Naive thymus-derived CD4-positive, alpha-beta T cell (primary cell): ENCODE measurements at regions of chr16 and their contacts with region 1.

Region 1: GRCh38 chr16:30534368-30535105 is at the start of gene ZNF747:
- DNase-seq: peak; percentile 84 to 92 (median 89)
- ATAC-seq: peak; percentile 87
- H3K4me3 ChIP-seq: peak within 1 kb of the TSS; percentile 60
- H3K4me3 Mint-ChIP-seq: peak within 1 kb of the TSS; percentile 91 to 100 (median 96)
- H3K27ac ChIP-seq: peak within 1 kb of the TSS; percentile 98
- H3K27ac Mint-ChIP-seq: peak within 1 kb of the TSS; percentile 94 to 99 (median 98)
- H3K4me1 ChIP-seq: peaks cover 8 to 13% of the 10 kb centered on the region in 2 donors
- H3K4me1 Mint-ChIP-seq: peaks cover 14 to 53% (median 43%) of the 10 kb centered on the region in 7 donors
- H3K27me3 ChIP-seq: no peaks in the 10 kb centered on the region
- H3K27me3 Mint-ChIP-seq: no peaks in the 10 kb centered on the region
- total RNA-seq, gene ZNF747: 9.1 to 17.4 (median 13.8) TPM

Region 2: GRCh38 chr16:30417529-30418349 is 116.8 kb before region 1 on chr16:
- CTCF ChIA-PET with region 1: interaction called, 8 read pairs
- POLR2A ChIA-PET with region 1: interaction called, 23 read pairs
- intact Hi-C with region 1: no loop called
- DNase-seq: peak; percentile 79 to 93 (median 88)
- ATAC-seq: peak; percentile 95
- H3K4me3 ChIP-seq: peak overlapping the region; percentile 76
- H3K4me3 Mint-ChIP-seq: peak overlapping the region; percentile 54 to 80 (median 70)
- H3K27ac ChIP-seq: peak overlapping the region; percentile 85
- H3K27ac Mint-ChIP-seq: peak overlapping the region in 7 of 9 donors; percentile 69 to 88 (median 81)
- H3K4me1 ChIP-seq: peaks cover 6 to 8% of the 10 kb centered on the region in 2 donors
- H3K4me1 Mint-ChIP-seq: peaks cover 12 to 31% (median 14%) of the 10 kb centered on the region in 7 donors
- H3K27me3 ChIP-seq: no peaks in the 10 kb centered on the region
- H3K27me3 Mint-ChIP-seq: no peaks in the 10 kb centered on the region

Region 3: DNA sequence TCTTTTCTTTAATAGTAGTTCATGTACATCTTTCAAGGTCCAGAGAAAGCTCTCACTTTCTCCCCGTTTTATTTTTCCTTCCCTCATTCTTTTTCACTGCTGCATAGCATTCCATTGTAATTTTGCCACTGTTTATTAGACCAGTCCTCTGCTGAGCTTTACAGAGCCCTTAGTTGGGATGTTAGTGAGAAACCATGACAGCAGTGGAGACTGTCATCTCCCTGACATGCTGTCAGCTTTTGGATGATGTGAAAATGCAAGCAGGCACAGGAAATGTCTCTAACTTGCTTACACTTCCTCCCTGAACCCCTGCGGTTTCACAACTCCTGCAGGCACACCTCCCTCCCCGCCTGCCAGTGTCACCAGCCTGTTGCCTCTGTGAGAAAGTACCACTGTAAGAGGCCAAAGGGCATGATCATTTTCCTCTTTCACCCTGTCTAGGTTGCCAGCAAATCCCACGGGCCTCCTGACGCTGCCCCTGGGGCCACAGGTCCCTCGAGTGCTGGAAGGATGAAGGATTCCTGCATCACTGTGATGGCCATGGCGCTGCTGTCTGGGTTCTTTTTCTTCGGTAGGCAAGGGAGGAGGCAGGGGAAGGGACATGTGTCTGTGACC is 62.1 kb before region 1 on chr16 and contains the start of gene ITGAL:
- CTCF ChIA-PET with region 1: interaction called, 3 read pairs
- POLR2A ChIA-PET with region 1: interaction called, 10 read pairs
- intact Hi-C with region 1: loop called in 1 of 2 experiments (anchors 1 kb)
- DNase-seq: peak; percentile 41 to 89 (median 84)
- ATAC-seq: peak; percentile 89
- H3K4me3 ChIP-seq: peak within 1 kb of the TSS; percentile 74
- H3K4me3 Mint-ChIP-seq: peak within 1 kb of the TSS; percentile 83 to 100 (median 98)
- H3K27ac ChIP-seq: peak within 1 kb of the TSS; percentile 84
- H3K27ac Mint-ChIP-seq: peak within 1 kb of the TSS; percentile 88 to 98 (median 96)
- H3K4me1 ChIP-seq: peaks cover 60 to 63% of the 10 kb centered on the region in 2 donors
- H3K4me1 Mint-ChIP-seq: peaks cover 43 to 83% (median 57%) of the 10 kb centered on the region in 7 donors
- H3K27me3 ChIP-seq: no peaks in the 10 kb centered on the region
- H3K27me3 Mint-ChIP-seq: no peaks in the 10 kb centered on the region
- total RNA-seq, gene ITGAL: 258 to 629 (median 436) TPM

Region 4: DNA sequence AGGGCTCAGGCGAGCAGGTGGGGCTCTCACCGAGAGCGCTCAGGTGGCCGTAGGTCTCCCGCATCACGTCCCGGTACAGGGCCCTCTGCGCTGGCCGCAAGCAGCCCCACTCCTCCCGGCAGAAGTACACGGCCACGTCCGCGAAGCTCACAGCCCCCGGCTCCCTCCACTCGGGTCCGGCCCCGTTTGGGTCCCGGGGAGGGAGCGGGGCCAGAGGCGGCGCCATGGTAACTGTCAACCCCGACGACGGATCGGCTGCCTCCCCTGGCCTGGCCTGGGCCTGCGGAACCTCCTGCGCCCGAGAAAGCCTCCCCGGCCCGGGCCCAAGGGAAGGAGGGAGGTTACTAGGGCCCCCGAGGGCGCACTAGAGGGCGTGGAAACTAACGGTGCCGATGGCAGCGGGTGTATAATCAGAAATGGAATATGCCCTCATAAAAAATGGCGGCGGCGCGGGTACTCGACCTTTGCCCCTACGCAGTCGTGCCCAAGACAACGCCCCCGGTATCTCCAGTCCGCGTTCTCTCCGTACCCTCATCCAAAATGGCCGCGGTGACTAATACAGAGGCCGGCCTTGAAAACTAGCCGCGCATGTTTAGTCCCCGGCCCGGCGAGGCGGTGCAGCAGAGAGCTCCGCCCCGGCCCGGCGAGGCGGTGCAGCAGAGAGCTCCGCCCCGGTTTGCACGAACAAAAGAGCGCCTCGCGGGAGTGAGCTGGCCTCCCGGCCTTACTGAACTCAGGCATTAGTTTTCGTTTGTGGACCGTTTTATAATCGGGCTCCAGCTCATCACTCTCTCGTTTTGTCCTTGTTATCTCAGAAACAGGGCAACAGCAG is 23.6 kb after region 1 on chr16 and contains the start of gene ZNF764:
- CTCF ChIA-PET with region 1: interaction called, 37 read pairs
- POLR2A ChIA-PET with region 1: interaction called, 159 read pairs
- intact Hi-C with region 1: loop called (anchors 1 kb)
- DNase-seq: peak; percentile 79 to 95 (median 91)
- ATAC-seq: peak; percentile 95
- H3K4me3 ChIP-seq: peak within 1 kb of the TSS; percentile 92
- H3K4me3 Mint-ChIP-seq: peak within 1 kb of the TSS; percentile 83 to 92 (median 90)
- H3K27ac ChIP-seq: peak within 1 kb of the TSS; percentile 99
- H3K27ac Mint-ChIP-seq: peak within 1 kb of the TSS; percentile 87 to 94 (median 92)
- H3K4me1 ChIP-seq: peaks cover 12 to 15% of the 10 kb centered on the region in 2 donors
- H3K4me1 Mint-ChIP-seq: peaks cover 33 to 58% (median 43%) of the 10 kb centered on the region in 7 donors
- H3K27me3 ChIP-seq: no peaks in the 10 kb centered on the region
- H3K27me3 Mint-ChIP-seq: no peaks in the 10 kb centered on the region
- total RNA-seq, gene ZNF764: 11.9 to 20.9 (median 19.3) TPM

Region 5: GRCh38 chr16:30585400-30586189 is 51.1 kb after region 1 on chr16 and contains the start of gene ZNF785:
- CTCF ChIA-PET with region 1: no interaction called
- POLR2A ChIA-PET with region 1: interaction called, 10 read pairs
- intact Hi-C with region 1: loop called (anchors 1 kb)
- DNase-seq: peak; percentile 72 to 95 (median 93)
- ATAC-seq: peak; percentile 100
- H3K4me3 ChIP-seq: peak within 1 kb of the TSS; percentile 77
- H3K4me3 Mint-ChIP-seq: peak within 1 kb of the TSS; percentile 85 to 98 (median 94)
- H3K27ac ChIP-seq: peak within 1 kb of the TSS; percentile 81
- H3K27ac Mint-ChIP-seq: peak within 1 kb of the TSS; percentile 89 to 95 (median 92)
- H3K4me1 ChIP-seq: peaks cover 8 to 12% of the 10 kb centered on the region in 2 donors
- H3K4me1 Mint-ChIP-seq: peaks cover 6 to 44% (median 32%) of the 10 kb centered on the region in 7 donors
- H3K27me3 ChIP-seq: no peaks in the 10 kb centered on the region
- H3K27me3 Mint-ChIP-seq: peaks cover 0 to 2% (median 0%) of the 10 kb centered on the region in 5 donors
- total RNA-seq, gene ZNF785: 10.2 to 37.1 (median 21.4) TPM

Region 6: DNA sequence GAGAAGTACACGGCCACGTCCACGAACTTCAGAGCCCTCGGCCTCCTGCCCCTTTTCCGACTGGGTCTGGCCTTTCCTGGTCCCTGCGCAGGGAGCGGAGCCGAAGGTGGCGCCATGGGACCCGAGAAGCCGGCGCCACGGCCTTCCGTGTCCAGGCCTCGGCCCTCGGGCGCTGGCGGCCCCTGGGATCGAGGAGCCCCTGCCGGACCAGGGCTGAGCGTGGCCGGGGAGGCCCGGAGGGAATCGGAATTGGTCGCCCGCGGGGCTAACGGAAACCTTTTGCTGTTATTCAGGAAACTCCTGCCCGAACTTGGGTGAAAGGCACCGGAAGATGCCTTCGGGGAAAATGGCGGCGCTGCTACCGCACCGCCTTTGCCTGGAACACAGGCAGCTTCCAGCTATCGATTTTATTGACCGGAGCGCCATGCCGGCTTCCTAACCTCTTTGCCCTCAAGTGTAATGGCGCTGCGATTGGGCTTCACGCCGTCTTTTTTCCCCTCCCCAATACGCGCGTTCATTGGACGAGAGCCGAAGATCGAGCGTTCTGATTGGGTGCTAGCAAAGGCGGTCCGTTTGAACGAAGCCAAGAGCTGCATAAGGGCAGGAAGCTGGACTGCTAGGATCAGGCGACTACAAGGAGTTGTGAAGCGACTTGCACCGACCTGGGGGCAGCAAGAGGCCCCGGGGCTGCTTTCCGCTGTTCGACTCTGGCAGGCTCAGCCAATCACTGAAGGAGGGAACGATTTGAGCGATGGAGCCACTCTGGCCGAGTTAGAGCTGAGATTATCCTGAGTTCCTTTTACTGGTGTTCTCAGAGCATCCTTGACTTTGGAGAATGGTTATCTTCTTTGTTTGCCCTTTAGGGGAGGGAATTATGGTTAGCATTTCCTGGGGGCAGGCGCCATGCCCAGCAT is 75.6 kb after region 1 on chr16 and contains the start of gene ZNF689:
- CTCF ChIA-PET with region 1: interaction called, 4 read pairs
- POLR2A ChIA-PET with region 1: interaction called, 6 read pairs
- intact Hi-C with region 1: loop called in 1 of 2 experiments (anchors 1 kb)
- DNase-seq: peak; percentile 90 to 98 (median 93)
- ATAC-seq: peak; percentile 96
- H3K4me3 ChIP-seq: peak within 1 kb of the TSS; percentile 98
- H3K4me3 Mint-ChIP-seq: peak within 1 kb of the TSS; percentile 89 to 97 (median 94)
- H3K27ac ChIP-seq: peak within 1 kb of the TSS; percentile 94
- H3K27ac Mint-ChIP-seq: peak within 1 kb of the TSS; percentile 94 to 99 (median 97)
- H3K4me1 ChIP-seq: peaks cover 8 to 11% of the 10 kb centered on the region in 2 donors
- H3K4me1 Mint-ChIP-seq: peaks cover 5 to 26% (median 22%) of the 10 kb centered on the region in 7 donors
- H3K27me3 ChIP-seq: no peaks in the 10 kb centered on the region
- H3K27me3 Mint-ChIP-seq: no peaks in the 10 kb centered on the region
- total RNA-seq, gene ZNF689: 6.8 to 14.6 (median 12.4) TPM